ENCODE measurements at regions of chr2 and their contacts with region 1.

Region 1: DNA sequence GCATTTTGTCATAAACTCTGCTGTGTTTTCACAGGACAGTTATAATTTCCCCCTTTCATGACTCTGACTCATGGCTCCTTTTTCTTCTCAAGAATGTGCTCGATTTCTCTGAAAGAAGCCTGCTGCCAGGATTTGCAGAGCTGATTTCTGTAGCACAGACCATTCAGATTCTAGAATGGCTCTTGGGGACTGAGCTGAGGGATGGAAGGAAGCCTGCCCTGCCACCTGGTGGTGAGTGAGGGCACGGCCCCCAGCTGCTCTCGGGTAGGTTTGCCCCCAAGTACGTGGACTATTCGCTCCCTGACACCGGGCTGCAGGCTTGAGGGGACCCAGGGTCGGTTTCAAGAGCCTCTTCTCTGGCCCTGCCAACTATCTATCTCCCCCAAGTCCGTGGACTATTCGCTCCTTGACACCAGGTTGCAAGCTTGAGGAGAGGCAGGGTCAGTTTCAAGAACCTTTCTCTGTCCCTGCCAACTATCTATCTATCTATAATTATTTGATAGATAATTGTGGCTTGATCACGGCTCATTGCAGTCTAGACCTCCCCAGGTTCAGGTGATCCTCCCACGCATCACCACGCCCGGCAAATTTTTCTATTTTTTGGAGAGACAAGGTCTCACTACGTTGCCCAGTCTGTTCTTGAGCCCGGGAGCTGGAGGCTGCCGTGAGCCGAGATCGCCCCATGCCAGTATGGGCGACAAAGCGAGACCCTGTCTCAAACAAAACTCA is 1.4 kb upstream of the SMYD5 start:
- DNase-seq: peak; percentile 52 to 79 (median 68)
- ATAC-seq: peak; percentile 66 to 71
- H3K4me3 Mint-ChIP-seq: peak overlapping the region in 9 of 10 donors; percentile 44 to 88 (median 58)
- H3K27ac Mint-ChIP-seq: peak overlapping the region in 9 of 10 donors; percentile 13 to 98 (median 68)
- H3K4me1 Mint-ChIP-seq: peaks cover 14 to 39% (median 32%) of the 10 kb centered on the region in 4 donors
- H3K27me3 Mint-ChIP-seq: peaks cover 5 to 12% (median 7%) of the 10 kb centered on the region in 5 donors

Region 2: GRCh38 chr2:73176881-73177644 is 35.5 kb before region 1 on chr2:
- POLR2A ChIA-PET with region 1: interaction called, 11 read pairs
- DNase-seq: peak; percentile 77 to 95 (median 88)
- ATAC-seq: peak; percentile 84 to 90
- H3K4me3 Mint-ChIP-seq: peak overlapping the region; percentile 85 to 95 (median 93)
- H3K27ac Mint-ChIP-seq: peak overlapping the region in 5 of 10 donors; percentile 44 to 93 (median 63)
- H3K4me1 Mint-ChIP-seq: peaks cover 8 to 18% (median 16%) of the 10 kb centered on the region in 4 donors
- H3K27me3 Mint-ChIP-seq: peaks cover 20 to 74% (median 40%) of the 10 kb centered on the region in 5 donors